H1 (cell line): ENCODE measurements at regions of chr1 and their contacts with region 1.

Region 1: GRCh38 chr1:53959664-53960250 is 13.6 kb downstream of the LRRC42 start:
- DNase-seq: no peak
- H3K4me3 ChIP-seq: no peak overlapping the region
- H3K27ac ChIP-seq: no peak overlapping the region
- H3K4me1 ChIP-seq: peaks cover 0 to 10% (median 0%) of the 10 kb centered on the region in 4 experiments; a peak in 4 of 7 replicates
- H3K27me3 ChIP-seq: no peaks in the 10 kb centered on the region
- CTCF ChIP-seq: peak in 2 of 3 experiments; percentile 52 to 58; a peak in 2 of 4 replicates
- EP300 ChIP-seq: no peak
- POLR2A ChIP-seq: no peak
- RAD21 ChIP-seq: peak; percentile 61 to 63

Region 2: GRCh38 chr1:53705446-53706096 is 254.2 kb before region 1 on chr1:
- CTCF ChIA-PET with region 1: no interaction called
- POLR2A ChIA-PET with region 1: no interaction called
- DNase-seq: no peak
- H3K4me3 ChIP-seq: peak overlapping the region in 2 of 4 experiments; percentile 10 to 26; a peak in 4 of 8 replicates
- H3K27ac ChIP-seq: 0 out of 2 replicates have a peak overlapping the region, but pooled peaks have one; percentile 20
- H3K4me1 ChIP-seq: peaks cover 21 to 34% (median 29%) of the 10 kb centered on the region in 4 experiments
- H3K27me3 ChIP-seq: no peaks in the 10 kb centered on the region
- CTCF ChIP-seq: no peak
- EP300 ChIP-seq: no peak
- POLR2A ChIP-seq: no peak
- RAD21 ChIP-seq: no peak

Region 3: DNA sequence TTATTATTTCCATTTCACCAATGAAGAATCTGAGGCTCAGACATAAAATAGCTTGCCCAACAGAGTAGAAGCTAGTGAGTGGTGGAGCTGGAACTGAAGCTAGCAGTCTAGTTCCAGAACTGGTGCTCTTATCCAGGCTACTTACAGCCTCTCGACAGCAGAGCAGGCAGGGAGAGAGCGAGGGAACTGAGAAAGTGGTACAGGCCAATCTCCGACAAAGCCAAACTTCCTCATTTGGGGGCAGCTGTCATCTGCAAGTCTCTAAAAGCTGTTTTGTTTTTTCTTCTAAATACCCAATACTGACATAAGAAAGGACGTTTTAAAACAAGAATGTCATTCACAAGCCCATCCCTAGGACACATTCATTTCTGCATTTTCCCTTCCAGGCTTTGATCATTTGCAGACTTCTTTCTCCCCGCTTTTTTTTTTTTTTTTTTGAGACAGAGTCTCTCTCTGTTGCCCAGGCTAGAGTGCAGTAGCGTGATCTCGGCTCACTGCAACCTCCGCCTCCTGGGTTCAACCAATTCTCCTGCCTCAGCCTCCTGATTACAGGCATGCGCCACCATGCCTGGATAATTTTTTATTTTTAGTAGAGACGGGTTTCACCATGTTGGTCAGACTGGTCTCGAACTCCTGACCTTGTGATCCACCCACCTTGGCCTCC is 90.2 kb before region 1 on chr1:
- CTCF ChIA-PET with region 1: interaction called, 114 read pairs
- POLR2A ChIA-PET with region 1: interaction called, 4 read pairs
- DNase-seq: no peak
- H3K4me3 ChIP-seq: no peak overlapping the region
- H3K27ac ChIP-seq: no peak overlapping the region
- H3K4me1 ChIP-seq: no peaks in the 10 kb centered on the region
- H3K27me3 ChIP-seq: no peaks in the 10 kb centered on the region
- CTCF ChIP-seq: no peak
- EP300 ChIP-seq: no peak
- POLR2A ChIP-seq: no peak
- RAD21 ChIP-seq: no peak

Region 4: DNA sequence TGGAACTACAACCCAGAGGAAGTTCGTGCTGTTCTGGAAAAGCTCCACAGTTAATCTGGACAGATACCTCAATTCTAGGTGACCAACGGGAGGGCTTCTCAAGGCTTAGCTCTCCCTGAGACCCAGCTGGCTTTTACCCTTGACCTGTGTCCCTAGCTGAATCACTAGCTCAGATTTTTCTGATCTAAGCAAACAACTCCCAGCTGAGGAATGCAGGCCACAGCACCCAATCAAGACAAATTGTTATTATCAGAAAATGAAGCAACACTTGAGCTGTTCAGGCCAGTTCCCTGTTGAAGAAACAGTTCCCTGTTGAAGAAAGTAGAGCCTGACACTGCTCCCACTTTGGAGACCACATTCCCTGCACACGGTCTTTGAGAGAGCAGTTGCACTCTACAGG is 49.8 kb before region 1 on chr1:
- CTCF ChIA-PET with region 1: interaction called, 10 read pairs
- POLR2A ChIA-PET with region 1: no interaction called
- DNase-seq: no peak
- H3K4me3 ChIP-seq: no peak overlapping the region
- H3K27ac ChIP-seq: no peak overlapping the region
- H3K4me1 ChIP-seq: peaks cover 7 to 13% (median 11%) of the 10 kb centered on the region in 4 experiments
- H3K27me3 ChIP-seq: no peaks in the 10 kb centered on the region
- CTCF ChIP-seq: no peak
- EP300 ChIP-seq: no peak
- POLR2A ChIP-seq: no peak
- RAD21 ChIP-seq: no peak

Region 5: GRCh38 chr1:53979712-53980450 is 20.1 kb after region 1 on chr1:
- CTCF ChIA-PET with region 1: interaction called, 11 read pairs
- POLR2A ChIA-PET with region 1: interaction called, 4 read pairs
- DNase-seq: no peak
- H3K4me3 ChIP-seq: no peak overlapping the region
- H3K27ac ChIP-seq: no peak overlapping the region
- H3K4me1 ChIP-seq: peaks cover 0 to 5% (median 0%) of the 10 kb centered on the region in 4 experiments; a peak in 2 of 7 replicates
- H3K27me3 ChIP-seq: peaks cover 0 to 2% (median 0%) of the 10 kb centered on the region in 4 experiments; a peak in 1 of 7 replicates
- CTCF ChIP-seq: peak in 2 of 3 experiments; percentile 32 to 43; a peak in 3 of 4 replicates
- EP300 ChIP-seq: no peak
- POLR2A ChIP-seq: no peak
- RAD21 ChIP-seq: peak; percentile 15 to 37; a peak in 3 of 4 replicates

Region 6: GRCh38 chr1:54107131-54107530 is 147.4 kb after region 1 on chr1:
- CTCF ChIA-PET with region 1: no interaction called
- POLR2A ChIA-PET with region 1: no interaction called
- DNase-seq: peak in 1 of 2 experiments; percentile 46
- H3K4me3 ChIP-seq: no peak overlapping the region
- H3K27ac ChIP-seq: no peak overlapping the region
- H3K4me1 ChIP-seq: no peaks in the 10 kb centered on the region; a peak in 1 of 7 replicates
- H3K27me3 ChIP-seq: no peaks in the 10 kb centered on the region
- CTCF ChIP-seq: no peak
- EP300 ChIP-seq: no peak
- POLR2A ChIP-seq: no peak
- RAD21 ChIP-seq: no peak